ENCODE measurements at regions of chr2 and their contacts with region 1.

Region 1: DNA sequence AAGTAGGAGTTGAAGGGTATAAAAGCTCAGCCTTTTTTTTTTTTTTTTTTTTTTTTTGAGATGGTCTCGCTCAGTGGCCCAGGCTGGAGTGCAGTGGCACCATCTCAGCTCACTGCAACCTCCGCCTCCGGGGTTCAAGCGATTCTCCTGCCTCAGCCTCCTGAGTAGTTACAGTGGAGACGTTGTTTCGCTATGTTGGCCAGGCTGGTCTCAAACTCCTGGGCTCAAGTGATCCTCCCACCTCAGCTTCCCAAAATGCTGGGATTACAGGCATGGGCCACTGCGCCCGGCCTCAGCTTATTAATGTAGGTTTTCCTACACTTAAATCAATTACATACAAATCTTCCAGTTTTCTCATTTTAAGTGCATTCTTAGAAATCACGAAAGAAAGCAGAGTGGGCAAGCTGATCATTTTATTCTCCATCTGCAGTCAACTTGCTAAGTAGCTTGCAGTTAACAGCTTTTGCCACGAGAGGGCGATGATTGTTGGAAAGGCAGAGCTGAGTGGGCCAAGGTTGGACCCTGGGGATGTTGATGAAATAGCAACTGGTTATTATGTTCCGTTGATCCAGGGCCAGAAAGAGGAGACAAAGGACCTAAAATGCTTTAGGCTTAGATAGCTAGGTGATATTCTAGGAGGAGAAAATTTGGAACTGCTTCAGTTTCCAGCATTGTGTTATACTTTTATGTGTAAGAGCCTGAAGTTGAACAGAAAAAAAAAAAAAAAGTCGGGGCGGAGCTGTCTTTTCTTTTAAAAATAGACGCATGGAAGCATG is 234.4 kb upstream of the EPAS1 start:
- DNase-seq: peak; percentile 55 to 69
- ATAC-seq: peak; percentile 75 to 77
- H3K4me3 ChIP-seq: no peak overlapping the region
- H3K27ac ChIP-seq: peak overlapping the region; percentile 17 to 71 (median 64)
- H3K4me1 ChIP-seq: peaks cover 9 to 17% of the 10 kb centered on the region in 2 donors
- H3K27me3 ChIP-seq: no peaks in the 10 kb centered on the region
- CTCF ChIP-seq: peak; percentile 63 to 82 (median 76)
- POLR2A ChIP-seq: no peak

Region 2: GRCh38 chr2:45964226-45964845 is 98.5 kb before region 1 on chr2:
- in situ Hi-C with region 1: no loop called
- intact Hi-C with region 1: no loop called
- DNase-seq: peak in 1 of 2 donors; percentile 33
- ATAC-seq: peak; percentile 25 to 60
- H3K4me3 ChIP-seq: no peak overlapping the region
- H3K27ac ChIP-seq: peak overlapping the region; percentile 8 to 33 (median 19)
- H3K4me1 ChIP-seq: peaks cover 9 to 38% of the 10 kb centered on the region in 2 donors
- H3K27me3 ChIP-seq: no peaks in the 10 kb centered on the region
- CTCF ChIP-seq: no peak
- POLR2A ChIP-seq: no peak

Region 3: GRCh38 chr2:46097714-46098480 is 35.1 kb after region 1 on chr2:
- in situ Hi-C with region 1: no loop called
- intact Hi-C with region 1: no loop called
- DNase-seq: peak; percentile 34 to 37
- ATAC-seq: peak; percentile 71 to 81
- H3K4me3 ChIP-seq: no peak overlapping the region
- H3K27ac ChIP-seq: peak overlapping the region; percentile 30 to 65 (median 53)
- H3K4me1 ChIP-seq: peaks cover 8 to 10% of the 10 kb centered on the region in 2 donors
- H3K27me3 ChIP-seq: no peaks in the 10 kb centered on the region
- CTCF ChIP-seq: no peak
- POLR2A ChIP-seq: no peak

Region 4: DNA sequence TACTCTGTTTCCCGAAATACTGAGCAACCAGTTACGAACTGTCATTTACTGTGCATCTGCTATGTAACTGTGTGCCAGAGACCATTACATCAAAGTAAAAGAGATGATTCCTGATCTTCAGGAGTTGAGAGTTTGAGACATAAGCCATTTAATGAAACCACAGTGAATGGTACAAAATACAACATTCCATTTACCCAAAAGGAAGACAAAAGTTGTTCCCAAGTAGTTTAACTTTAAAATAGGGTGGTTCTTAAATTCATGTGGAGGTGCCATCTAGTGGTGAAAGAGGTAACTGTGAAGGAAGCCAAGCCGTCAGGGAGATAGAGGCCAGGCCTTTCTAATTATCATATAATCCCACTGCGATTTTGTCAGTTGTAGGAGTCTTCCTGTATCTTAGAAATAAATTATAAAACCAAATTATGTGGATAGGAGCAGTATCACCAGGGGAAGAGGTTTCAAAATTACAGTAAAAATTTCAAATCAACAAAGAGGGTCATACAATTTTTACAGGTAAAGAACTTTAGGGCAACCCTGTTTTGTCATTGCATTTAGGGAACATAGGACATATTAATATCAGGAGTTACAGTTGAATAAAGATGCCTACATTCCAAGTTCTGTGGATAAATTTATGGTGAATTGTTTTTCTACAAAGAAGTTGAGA is 302.1 kb after region 1 on chr2:
- in situ Hi-C with region 1: loop called in 1 of 4 experiments (anchors 25 kb)
- intact Hi-C with region 1: loop called (anchors 2 kb)
- DNase-seq: no peak
- ATAC-seq: peak; percentile 44 to 71
- H3K4me3 ChIP-seq: no peak overlapping the region
- H3K27ac ChIP-seq: peak overlapping the region in 2 of 4 donors; percentile 12 to 19
- H3K4me1 ChIP-seq: peaks cover 7 to 10% of the 10 kb centered on the region in 2 donors
- H3K27me3 ChIP-seq: no peaks in the 10 kb centered on the region
- CTCF ChIP-seq: peak; percentile 71 to 84 (median 78)
- POLR2A ChIP-seq: no peak

Region 5: DNA sequence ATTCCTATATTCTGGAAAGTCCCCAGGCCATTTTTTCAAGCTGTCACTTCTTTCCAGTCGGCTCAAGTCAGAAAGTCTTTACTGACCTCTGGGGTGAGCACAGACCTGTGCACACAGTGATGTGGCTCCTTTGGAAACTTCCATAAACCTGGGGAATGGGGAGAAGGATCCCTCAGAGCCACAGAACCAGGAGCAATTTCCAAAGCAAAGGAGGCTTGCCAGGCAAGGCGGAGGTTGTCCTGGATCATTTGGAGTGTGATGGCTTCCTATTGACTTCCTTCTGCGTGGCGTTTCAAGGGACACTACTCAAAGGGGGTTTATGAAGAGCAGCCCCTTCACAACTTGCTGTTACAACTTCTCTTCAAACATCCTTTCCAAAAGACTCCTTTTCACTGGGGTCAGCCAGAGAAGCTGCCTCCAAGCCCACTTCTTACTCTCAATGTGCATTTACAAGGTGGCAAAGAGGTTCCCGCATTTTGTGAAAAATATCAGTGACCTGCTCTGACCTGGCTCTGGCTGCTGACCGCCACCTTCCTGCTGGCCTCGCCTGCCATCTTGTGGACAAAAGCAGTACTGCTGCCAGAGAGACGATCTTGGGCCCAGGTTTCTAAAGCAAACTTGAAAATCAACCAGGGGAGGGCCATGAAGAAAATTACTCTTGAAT is 398.3 kb after region 1 on chr2:
- in situ Hi-C with region 1: no loop called
- intact Hi-C with region 1: loop called (anchors 2 kb)
- DNase-seq: peak; percentile 55 to 63
- ATAC-seq: peak; percentile 56 to 67
- H3K4me3 ChIP-seq: no peak overlapping the region
- H3K27ac ChIP-seq: peak overlapping the region in 1 of 4 donors; percentile 13
- H3K4me1 ChIP-seq: peaks cover 7 to 8% of the 10 kb centered on the region in 2 donors
- H3K27me3 ChIP-seq: no peaks in the 10 kb centered on the region
- CTCF ChIP-seq: peak; percentile 95 to 99 (median 97)
- POLR2A ChIP-seq: no peak

Region 6: DNA sequence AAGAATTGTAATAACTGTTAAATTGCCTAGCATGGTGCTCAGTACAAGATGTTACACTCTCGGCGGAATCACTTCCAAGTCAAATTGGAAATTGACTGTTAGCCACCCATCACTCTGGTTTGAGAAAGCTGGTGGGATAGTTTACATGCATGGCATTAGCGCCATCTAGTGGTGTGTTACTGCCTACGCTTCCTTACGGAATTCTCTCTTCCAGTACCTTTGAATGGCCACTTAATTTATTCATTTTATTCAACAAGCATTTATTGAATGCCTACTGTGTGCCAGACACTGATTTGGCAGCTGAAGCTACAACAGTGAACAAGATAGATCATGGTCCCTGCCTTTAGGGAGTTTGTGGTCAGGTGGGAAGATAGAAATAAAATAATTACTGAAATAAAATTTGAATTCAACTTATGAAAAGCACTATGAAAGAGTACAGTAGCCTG is 587.8 kb after region 1 on chr2:
- in situ Hi-C with region 1: no loop called
- intact Hi-C with region 1: loop called (anchors 5 kb)
- DNase-seq: peak; percentile 30 to 62
- ATAC-seq: peak; percentile 75 to 86
- H3K4me3 ChIP-seq: no peak overlapping the region
- H3K27ac ChIP-seq: no peak overlapping the region
- H3K4me1 ChIP-seq: peaks cover 0 to 4% of the 10 kb centered on the region in 2 donors
- H3K27me3 ChIP-seq: no peaks in the 10 kb centered on the region
- CTCF ChIP-seq: peak; percentile 82 to 98 (median 92)
- POLR2A ChIP-seq: no peak

Measured in gastrocnemius medialis (tissue), 4 donors.